ENCODE measurements at regions of chr3 and their contacts with region 1.

Region 1: GRCh38 chr3:151439652-151440129 is 21.2 kb downstream of the IGSF10 start:
- DNase-seq: no peak
- ATAC-seq: peak; percentile 90 to 97 (median 94)
- H3K4me3 ChIP-seq: no peak overlapping the region
- H3K27ac ChIP-seq: no peak overlapping the region
- H3K4me1 ChIP-seq: peaks cover 0 to under 1% (median 0%) of the 10 kb centered on the region in 4 donors
- H3K27me3 ChIP-seq: no peaks in the 10 kb centered on the region
- CTCF ChIP-seq: peak; percentile 82 to 86 (median 84)
- POLR2A ChIP-seq: no peak

Region 2: GRCh38 chr3:151086484-151087456 is 352.9 kb before region 1 on chr3:
- intact Hi-C with region 1: no loop called
- DNase-seq: peak; percentile 63 to 83 (median 81)
- ATAC-seq: peak; percentile 83 to 93 (median 90)
- H3K4me3 ChIP-seq: peak overlapping the region; percentile 46 to 63 (median 49)
- H3K27ac ChIP-seq: no peak overlapping the region
- H3K4me1 ChIP-seq: peaks cover 0 to 17% (median 0%) of the 10 kb centered on the region in 4 donors
- H3K27me3 ChIP-seq: no peaks in the 10 kb centered on the region
- CTCF ChIP-seq: peak; percentile 22 to 46 (median 45)
- POLR2A ChIP-seq: no peak

Region 3: GRCh38 chr3:151384741-151385174 is 54.9 kb before region 1 on chr3 and contains the start of gene P2RY12:
- intact Hi-C with region 1: no loop called
- DNase-seq: no peak
- ATAC-seq: peak; percentile 44 to 64 (median 48)
- H3K4me3 ChIP-seq: peak within 1 kb of the TSS in 2 of 3 donors; percentile 1 to 9
- H3K27ac ChIP-seq: no peak within 1 kb of the TSS
- H3K4me1 ChIP-seq: no peaks in the 10 kb centered on the region
- H3K27me3 ChIP-seq: no peaks in the 10 kb centered on the region
- CTCF ChIP-seq: no peak
- POLR2A ChIP-seq: no peak
- total RNA-seq, gene P2RY12: 0.42 to 1.8 (median 1.2) TPM

Region 4: GRCh38 chr3:151843275-151843674 is 403.6 kb after region 1 on chr3:
- intact Hi-C with region 1: loop called in 1 of 2 experiments (anchors 10 kb)
- DNase-seq: no peak
- ATAC-seq: peak; percentile 82 to 92 (median 87)
- H3K4me3 ChIP-seq: no peak overlapping the region
- H3K27ac ChIP-seq: peak overlapping the region in 1 of 3 donors; percentile 47
- H3K4me1 ChIP-seq: peaks cover 0 to 23% (median 1%) of the 10 kb centered on the region in 4 donors
- H3K27me3 ChIP-seq: no peaks in the 10 kb centered on the region
- CTCF ChIP-seq: no peak
- POLR2A ChIP-seq: no peak

Region 5: DNA sequence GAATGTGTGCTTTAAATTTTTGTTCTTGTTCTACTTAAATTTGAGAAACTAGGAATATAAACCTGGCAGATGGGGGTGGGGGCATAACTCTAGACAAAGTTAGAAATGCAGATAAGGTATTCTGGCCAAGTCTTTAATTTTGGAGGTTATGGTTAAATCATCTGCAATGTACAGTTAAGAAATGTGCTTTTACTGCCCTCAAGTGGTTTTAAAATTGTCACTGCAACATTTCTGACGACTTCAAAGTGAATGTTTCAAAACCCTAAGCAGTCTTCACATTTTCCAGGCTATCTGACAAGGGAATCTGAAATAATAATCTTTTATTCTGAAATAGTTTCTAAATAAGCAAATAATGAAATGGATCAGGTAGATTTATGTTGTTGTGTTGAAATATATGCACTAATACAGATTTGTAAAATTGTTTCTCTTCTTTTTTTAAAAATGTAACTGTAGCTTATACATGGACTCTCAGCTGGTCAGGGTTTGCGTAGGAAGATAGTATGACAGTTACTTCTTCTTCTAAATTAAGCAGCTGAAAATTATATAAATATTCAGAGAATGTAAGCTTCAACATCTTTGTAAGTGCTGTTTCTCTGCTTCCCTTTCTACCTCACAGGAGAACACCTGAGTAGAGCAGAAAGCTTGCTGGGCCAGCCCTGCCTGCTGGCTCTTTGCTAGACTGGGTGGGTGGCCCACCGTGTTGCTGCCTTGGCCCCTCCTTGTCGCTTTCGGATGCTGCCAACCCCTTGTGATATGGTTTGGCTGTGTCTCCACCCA is 478.8 kb after region 1 on chr3:
- intact Hi-C with region 1: loop called (anchors 10 kb)
- DNase-seq: no peak
- ATAC-seq: peak; percentile 82 to 91 (median 88)
- H3K4me3 ChIP-seq: no peak overlapping the region
- H3K27ac ChIP-seq: no peak overlapping the region
- H3K4me1 ChIP-seq: no peaks in the 10 kb centered on the region
- H3K27me3 ChIP-seq: no peaks in the 10 kb centered on the region
- CTCF ChIP-seq: peak; percentile 68 to 78 (median 72)
- POLR2A ChIP-seq: no peak

Region 6: GRCh38 chr3:151925876-151926275 is 486.2 kb after region 1 on chr3:
- intact Hi-C with region 1: loop called in 1 of 2 experiments (anchors 10 kb)
- DNase-seq: no peak
- ATAC-seq: no peak
- H3K4me3 ChIP-seq: no peak overlapping the region
- H3K27ac ChIP-seq: no peak overlapping the region
- H3K4me1 ChIP-seq: no peaks in the 10 kb centered on the region
- H3K27me3 ChIP-seq: no peaks in the 10 kb centered on the region
- CTCF ChIP-seq: no peak
- POLR2A ChIP-seq: no peak

Measured in right lobe of liver (tissue), 6 donors.